ENCODE measurements at regions of chr10 and their contacts with region 1.

Region 1: DNA sequence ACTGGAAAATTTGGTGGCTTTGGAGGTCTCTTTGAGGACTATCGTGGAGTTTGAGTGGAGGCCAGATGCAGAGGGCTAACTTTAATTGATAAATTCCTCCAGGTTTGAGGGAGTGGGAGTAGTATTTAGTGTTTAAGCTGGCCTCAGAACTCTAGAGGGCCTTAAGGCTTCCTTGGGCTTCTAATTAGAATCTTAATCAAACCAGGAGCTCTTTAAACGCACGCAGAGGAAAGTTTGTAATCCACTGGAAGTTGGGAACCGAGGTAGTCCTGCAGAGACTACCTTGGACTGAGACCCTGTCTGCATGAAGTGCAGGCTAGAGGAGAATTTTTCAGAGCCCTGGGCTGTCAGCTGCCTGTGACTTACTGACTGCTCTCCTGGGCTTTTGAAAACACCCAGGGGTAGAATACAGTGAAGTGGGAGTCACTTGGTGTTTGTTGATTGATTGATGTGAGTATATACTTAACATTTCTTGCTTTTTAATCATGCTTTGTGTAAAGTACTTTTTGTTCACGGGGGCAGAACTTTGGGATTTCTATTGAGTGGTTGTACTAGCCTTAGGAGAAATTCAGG is 5.9 kb downstream of the SPAG6 start:
- DNase-seq: no peak
- H3K4me3 Mint-ChIP-seq: no peak overlapping the region
- H3K27ac Mint-ChIP-seq: no peak overlapping the region
- H3K4me1 Mint-ChIP-seq: no peaks in the 10 kb centered on the region
- H3K27me3 Mint-ChIP-seq: peaks cover 19% of the 10 kb centered on the region

Region 2: DNA sequence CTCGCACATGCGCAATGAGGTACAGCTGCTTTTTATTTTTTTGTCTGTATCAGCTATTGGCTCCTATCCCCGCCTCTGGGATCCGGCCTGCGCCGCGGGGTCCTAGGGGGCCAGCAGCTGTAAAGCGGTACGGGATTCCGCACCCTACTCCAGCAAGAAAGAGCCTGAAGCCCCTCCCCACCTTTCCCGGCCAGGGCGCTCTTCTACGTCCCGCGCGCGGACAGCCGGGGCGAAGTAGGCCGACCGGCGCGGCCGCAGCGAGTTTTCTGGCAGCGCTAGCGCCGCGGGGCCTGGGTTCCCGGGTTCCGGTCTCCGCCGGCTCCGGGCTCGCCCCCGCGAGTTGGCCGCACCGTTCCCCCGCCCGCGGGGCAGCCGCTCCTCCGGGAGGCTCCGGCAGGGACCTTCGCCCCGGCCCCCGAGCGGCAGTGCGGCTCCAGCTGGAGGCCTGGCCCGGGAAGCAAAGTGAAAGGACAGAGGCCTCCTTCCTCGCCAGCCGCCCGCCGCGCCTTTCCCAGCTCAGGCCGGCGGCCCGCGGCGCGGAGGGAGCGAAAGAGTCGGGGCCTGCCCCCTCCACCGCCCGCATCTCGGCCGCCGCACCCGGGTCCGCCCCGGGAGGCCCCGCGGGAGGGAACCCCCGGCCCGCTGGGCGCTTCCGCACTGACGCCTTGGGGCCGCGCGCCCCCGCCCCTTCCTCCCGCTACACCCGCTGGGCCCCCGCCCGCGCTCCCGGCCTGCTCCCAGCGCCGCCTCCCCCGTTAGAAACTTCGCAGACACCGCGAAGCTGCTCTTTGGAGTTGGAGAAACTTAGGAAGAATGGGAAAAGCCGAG is 10.6 kb before region 1 on chr10:
- CTCF ChIA-PET with region 1: no interaction called
- intact Hi-C with region 1: no loop called
- DNase-seq: peak; percentile 63
- H3K4me3 Mint-ChIP-seq: peak overlapping the region; percentile 88
- H3K27ac Mint-ChIP-seq: peak overlapping the region; percentile 74
- H3K4me1 Mint-ChIP-seq: peaks cover 19% of the 10 kb centered on the region
- H3K27me3 Mint-ChIP-seq: peaks cover 69% of the 10 kb centered on the region

Region 3: DNA sequence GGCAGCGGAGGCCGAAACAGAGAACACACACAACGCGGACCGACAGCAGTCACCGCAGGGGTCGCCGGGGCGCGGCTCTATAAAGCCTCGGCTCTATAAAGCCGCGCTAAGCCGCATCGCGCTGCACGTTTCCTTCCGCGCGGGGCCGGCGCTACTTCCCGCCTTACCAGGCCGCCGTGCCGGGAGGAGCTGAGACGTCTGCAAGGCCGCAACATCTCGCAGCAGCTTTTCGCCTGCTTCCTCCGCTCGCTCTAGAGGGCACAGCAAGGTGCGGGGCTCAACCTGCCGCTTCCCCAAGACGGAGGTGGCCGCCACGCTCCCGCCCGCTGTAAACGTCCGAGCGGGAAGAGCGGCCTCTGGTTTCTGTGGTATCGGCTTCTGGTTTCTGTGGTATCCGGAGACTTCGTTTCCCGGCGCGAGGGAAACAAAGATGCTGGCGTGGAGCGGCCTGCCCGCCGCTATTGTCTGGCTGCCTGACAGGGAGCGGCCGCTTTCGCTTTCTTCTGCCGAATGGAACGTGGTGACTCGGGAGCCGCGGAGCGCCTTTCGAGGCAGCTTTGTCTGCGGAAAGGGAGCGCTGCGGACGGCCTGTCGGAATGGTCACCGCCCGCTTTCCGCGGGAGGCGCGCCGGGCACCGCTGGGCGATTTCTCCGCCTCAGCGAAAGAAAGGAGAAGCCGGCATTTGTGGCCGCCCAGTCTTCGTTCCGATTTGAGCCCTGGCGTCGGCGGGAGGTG is 85.8 kb after region 1 on chr10:
- CTCF ChIA-PET with region 1: no interaction called
- intact Hi-C with region 1: no loop called
- DNase-seq: peak; percentile 84
- H3K4me3 Mint-ChIP-seq: peak overlapping the region; percentile 84
- H3K27ac Mint-ChIP-seq: peak overlapping the region; percentile 92
- H3K4me1 Mint-ChIP-seq: peaks cover 31% of the 10 kb centered on the region
- H3K27me3 Mint-ChIP-seq: no peaks in the 10 kb centered on the region

Region 4: DNA sequence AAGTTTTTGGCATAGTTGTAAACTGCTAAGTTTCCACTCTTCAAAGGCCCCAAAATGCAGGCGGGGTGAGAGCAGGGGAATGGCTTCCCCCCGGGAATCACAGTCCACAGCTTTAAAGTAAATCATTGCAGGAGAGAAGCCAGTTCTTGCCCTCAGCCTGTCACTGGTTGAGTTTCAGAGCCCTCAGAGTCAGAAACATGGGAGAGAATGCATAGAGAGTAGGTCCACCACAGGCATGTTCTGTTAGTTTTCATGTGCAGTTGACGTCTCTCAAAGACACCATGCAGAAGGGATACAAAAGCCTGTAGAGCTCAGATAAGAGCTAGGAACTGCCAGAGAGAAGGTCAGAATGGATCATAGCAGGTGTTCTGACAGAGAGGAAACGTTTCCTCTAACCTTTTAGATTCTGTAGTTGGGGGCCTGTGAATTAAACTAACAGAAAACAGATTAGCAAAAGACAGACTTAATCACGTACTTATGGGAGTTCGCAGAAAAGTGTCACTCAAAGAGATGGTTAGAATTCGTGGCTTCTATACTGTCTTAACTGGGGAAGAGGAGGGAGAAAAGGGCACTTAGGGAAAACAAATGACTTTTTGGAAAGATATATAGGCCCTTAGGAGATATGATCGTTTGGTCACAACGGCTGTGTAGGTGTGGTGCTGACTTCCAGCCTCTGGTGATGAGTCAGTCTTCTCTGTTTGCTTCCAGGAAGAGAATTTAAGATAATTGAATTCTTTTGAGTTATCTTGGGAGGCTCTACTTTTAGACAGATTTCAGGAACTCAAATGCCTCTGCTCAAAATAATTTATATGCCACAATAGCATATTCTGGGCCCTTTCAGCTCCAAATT is 696.2 kb after region 1 on chr10:
- CTCF ChIA-PET with region 1: interaction called, 13 read pairs
- intact Hi-C with region 1: no loop called
- DNase-seq: no peak
- H3K4me3 Mint-ChIP-seq: no peak overlapping the region
- H3K27ac Mint-ChIP-seq: no peak overlapping the region
- H3K4me1 Mint-ChIP-seq: no peaks in the 10 kb centered on the region
- H3K27me3 Mint-ChIP-seq: no peaks in the 10 kb centered on the region